Activated naive CD4-positive, alpha-beta T cell treated with anti-CD3 and anti-CD28 coated beads for 36 hours (primary cell): ENCODE measurements at regions of chr2 and their contacts with region 1.

Region 1: DNA sequence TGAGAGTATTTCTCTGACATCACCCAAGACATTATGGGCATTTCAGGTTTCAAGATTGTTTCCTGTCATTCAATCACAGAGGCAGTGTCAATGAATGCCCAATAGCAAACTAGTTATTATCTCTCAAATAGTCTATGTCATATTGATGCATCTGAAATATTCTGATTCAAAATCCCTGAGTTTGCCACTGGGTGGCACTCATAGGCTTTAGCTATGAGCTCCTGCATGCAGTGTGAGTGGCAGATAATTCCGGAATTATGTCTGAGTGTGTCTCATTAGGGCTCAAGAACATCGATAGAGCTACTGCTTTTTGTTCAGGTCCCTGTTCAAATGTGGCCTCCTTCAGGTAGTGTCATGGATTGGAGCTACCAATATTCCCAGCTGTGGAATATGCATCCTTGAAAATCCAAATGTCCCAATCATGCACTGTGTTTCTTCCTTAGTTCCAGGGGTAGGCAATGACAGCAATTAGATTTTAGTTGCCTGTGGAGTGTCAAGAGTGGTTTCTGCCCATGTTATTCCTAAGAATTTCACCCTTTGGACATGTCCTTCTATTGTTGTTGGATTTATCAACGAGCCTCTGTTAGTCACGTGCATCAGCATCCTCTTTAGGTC is 7.8 kb upstream of the OR6B3 start:
- DNase-seq: peak; percentile 68
- H3K4me3 Mint-ChIP-seq: no peak overlapping the region
- H3K27ac Mint-ChIP-seq: no peak overlapping the region
- H3K4me1 Mint-ChIP-seq: no peaks in the 10 kb centered on the region
- H3K27me3 Mint-ChIP-seq: peaks cover 21% of the 10 kb centered on the region

Region 2: DNA sequence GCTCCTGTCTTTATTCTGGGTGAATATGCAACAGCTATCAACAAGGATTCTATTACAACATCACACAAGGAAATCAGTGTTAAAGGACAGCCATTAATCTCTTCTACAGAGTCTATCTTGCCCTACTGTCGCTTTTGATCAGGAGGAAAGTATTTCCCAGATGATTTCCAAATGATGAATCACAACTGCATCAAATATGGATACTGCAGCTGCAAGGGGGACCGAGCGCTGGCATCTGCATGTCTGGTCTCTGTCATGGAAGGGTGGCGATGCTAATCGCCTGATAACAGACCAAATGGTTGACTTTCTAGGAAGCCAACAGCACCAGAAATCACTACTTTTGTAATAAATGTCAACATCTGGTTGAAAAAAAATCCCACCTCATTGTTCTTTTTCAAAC is 13.5 kb after region 1 on chr2:
- CTCF ChIA-PET with region 1: interaction called, 12 read pairs
- intact Hi-C with region 1: no loop called
- DNase-seq: no peak
- H3K4me3 Mint-ChIP-seq: no peak overlapping the region
- H3K27ac Mint-ChIP-seq: no peak overlapping the region
- H3K4me1 Mint-ChIP-seq: no peaks in the 10 kb centered on the region
- H3K27me3 Mint-ChIP-seq: peaks cover 10% of the 10 kb centered on the region

Region 3: GRCh38 chr2:240136013-240136670 is 75.1 kb after region 1 on chr2 and contains the start of gene COPS9:
- CTCF ChIA-PET with region 1: interaction called, 115 read pairs
- intact Hi-C with region 1: no loop called
- DNase-seq: peak; percentile 87
- H3K4me3 Mint-ChIP-seq: peak within 1 kb of the TSS; percentile 90
- H3K27ac Mint-ChIP-seq: peak within 1 kb of the TSS; percentile 74
- H3K4me1 Mint-ChIP-seq: peaks cover 25% of the 10 kb centered on the region
- H3K27me3 Mint-ChIP-seq: no peaks in the 10 kb centered on the region
- total RNA-seq, gene COPS9: 84.5 to 91.3 TPM

Region 4: GRCh38 chr2:240143801-240144648 is 82.9 kb after region 1 on chr2:
- CTCF ChIA-PET with region 1: interaction called, 115 read pairs
- intact Hi-C with region 1: loop called (anchors 1 kb)
- DNase-seq: peak; percentile 83
- H3K4me3 Mint-ChIP-seq: no peak overlapping the region
- H3K27ac Mint-ChIP-seq: no peak overlapping the region
- H3K4me1 Mint-ChIP-seq: no peaks in the 10 kb centered on the region
- H3K27me3 Mint-ChIP-seq: peaks cover 4% of the 10 kb centered on the region

Region 5: DNA sequence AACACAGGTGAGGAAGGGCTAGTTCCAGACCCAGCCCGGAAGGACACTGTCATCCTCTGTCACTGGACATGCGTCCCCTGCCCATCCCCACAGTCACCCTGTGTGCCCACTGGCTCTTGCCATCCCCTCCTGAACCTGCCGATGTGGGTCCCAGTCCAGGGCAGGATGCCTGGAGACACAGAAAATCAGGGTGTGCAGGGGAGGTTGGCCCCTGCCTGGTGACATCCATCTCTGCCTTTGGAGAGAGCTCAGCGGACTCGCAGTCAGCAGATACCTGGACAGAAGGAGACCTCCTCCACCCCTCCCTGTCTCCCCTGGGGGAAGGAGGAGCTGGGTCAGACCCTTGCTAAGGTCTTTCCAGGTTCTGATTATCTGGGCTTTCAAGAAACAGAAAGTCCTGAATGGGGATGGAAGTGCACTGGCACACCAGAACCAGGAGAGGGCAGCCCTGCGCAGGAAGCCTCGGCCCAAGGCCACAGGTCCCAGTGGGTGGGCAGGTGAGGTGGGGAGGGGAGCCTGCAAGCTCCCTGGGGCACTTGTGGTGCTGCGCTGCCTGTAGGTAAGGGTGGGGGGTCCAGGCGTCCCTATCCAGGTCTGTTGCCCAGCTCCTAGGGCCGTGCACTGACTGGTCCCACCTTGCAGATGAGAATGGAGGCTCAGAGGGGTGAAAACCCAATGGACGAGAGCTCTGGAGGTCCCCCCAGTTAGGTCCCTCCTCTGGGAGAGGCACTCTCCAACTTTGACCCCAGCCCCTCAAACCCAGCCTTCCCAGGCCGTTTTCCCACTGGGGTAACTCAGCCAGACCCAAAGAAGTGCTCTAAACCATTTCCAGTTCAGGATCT is 89.1 kb after region 1 on chr2:
- CTCF ChIA-PET with region 1: interaction called, 115 read pairs
- intact Hi-C with region 1: no loop called
- DNase-seq: peak; percentile 44
- H3K4me3 Mint-ChIP-seq: no peak overlapping the region
- H3K27ac Mint-ChIP-seq: no peak overlapping the region
- H3K4me1 Mint-ChIP-seq: no peaks in the 10 kb centered on the region
- H3K27me3 Mint-ChIP-seq: peaks cover 13% of the 10 kb centered on the region

Region 6: GRCh38 chr2:240333985-240334384 is 272.9 kb after region 1 on chr2:
- CTCF ChIA-PET with region 1: no interaction called
- intact Hi-C with region 1: no loop called
- DNase-seq: no peak
- H3K4me3 Mint-ChIP-seq: no peak overlapping the region
- H3K27ac Mint-ChIP-seq: no peak overlapping the region
- H3K4me1 Mint-ChIP-seq: no peaks in the 10 kb centered on the region
- H3K27me3 Mint-ChIP-seq: peaks cover 24% of the 10 kb centered on the region

Region 7: DNA sequence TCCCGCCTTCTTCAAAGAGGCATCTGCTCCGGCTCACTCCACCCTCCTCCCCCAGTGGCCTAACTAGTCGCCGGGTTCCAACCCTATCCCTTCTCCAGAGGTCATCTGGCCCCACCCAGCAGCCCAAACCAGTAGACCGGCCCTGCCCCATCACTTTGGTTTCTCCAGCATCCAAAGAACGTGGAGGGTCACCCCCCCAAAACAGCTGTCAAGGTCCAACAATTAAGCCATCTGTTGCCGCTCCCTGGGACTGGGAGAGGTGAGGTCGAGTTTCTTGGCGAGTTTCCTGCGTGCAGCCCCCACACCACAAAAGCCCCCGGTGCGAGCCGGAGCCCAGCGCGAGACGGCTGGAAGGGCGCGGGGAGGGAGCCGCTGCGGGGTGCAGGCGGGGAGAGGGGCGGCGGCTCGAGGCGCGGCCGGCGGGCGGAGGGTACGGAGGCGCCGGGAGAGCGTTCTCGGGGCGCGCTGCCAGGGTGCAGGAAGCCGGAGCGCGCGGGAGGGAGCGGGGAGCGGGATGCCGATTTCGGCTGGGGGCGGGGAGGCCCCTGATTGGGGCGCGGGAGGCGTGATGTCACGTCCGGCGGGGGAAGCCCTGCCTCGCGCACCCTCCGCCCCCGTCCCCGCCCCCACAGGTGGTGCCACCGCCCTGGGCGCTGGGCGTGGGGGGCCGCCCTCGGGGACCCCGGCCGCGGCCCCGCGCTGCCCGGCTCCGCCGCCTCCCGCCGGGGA is 373.8 kb after region 1 on chr2:
- CTCF ChIA-PET with region 1: no interaction called
- intact Hi-C with region 1: loop called (anchors 2 kb)
- DNase-seq: peak; percentile 88
- H3K4me3 Mint-ChIP-seq: peak overlapping the region; percentile 74
- H3K27ac Mint-ChIP-seq: no peak overlapping the region
- H3K4me1 Mint-ChIP-seq: peaks cover 8% of the 10 kb centered on the region
- H3K27me3 Mint-ChIP-seq: peaks cover 20% of the 10 kb centered on the region